HEK293 (cell line): ENCODE measurements at regions of chr5 and their contacts with region 1.

Region 1: DNA sequence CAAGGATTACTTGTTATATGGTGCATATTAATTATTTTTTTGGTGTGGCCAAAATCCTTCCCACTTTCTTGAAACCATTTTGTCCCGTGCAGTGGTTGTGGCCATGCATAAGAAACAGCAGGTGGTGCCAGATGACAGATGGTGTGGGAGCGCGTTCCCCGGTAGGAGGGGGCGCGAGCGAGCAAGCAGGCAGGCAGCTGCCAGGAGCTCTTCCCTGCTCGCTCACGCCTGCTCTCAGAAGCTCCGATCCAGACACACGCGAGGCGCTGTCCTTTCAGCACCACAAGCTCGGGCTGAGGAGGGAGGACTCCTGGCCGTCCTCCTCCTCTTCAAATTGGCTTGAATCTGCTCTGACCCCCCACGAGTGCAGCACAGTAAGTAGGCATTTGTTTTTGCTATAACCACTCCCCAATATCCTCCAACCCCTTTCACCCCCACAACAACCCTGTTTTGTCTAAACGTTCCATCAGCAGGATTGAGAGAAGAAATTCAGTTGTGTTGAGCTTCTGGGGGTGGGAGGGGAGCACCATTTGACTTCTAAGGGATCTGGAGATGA is at the start of gene NSG2:
- H3K4me3 ChIP-seq: no peak within 1 kb of the TSS
- H3K27ac ChIP-seq: no peak within 1 kb of the TSS
- H3K4me1 ChIP-seq: no peaks in the 10 kb centered on the region
- CTCF ChIP-seq: peak; percentile 99

Region 2: DNA sequence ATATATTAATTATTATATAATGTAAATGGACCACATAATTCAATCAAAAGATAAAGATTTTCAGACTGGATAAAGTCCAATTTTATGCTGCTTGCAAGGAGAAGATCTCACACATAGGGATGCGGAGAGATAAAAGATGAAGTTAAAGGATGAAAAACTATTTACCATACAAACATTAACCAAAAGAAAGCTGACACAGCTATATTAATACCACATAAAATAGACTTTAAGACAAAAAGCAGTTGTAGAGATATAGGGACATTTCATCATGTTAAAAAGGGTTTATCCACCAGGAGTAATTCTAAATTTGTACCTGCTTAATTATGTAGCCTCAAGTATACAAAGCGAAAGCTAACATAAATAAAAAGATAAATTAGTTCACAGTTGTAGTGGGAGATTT is 15.3 kb before region 1 on chr5:
- CTCF ChIA-PET with region 1: interaction called, 10 read pairs
- POLR2A ChIA-PET with region 1: no interaction called
- H3K4me3 ChIP-seq: no peak overlapping the region
- H3K27ac ChIP-seq: no peak overlapping the region
- H3K4me1 ChIP-seq: no peaks in the 10 kb centered on the region
- CTCF ChIP-seq: no peak

Region 3: DNA sequence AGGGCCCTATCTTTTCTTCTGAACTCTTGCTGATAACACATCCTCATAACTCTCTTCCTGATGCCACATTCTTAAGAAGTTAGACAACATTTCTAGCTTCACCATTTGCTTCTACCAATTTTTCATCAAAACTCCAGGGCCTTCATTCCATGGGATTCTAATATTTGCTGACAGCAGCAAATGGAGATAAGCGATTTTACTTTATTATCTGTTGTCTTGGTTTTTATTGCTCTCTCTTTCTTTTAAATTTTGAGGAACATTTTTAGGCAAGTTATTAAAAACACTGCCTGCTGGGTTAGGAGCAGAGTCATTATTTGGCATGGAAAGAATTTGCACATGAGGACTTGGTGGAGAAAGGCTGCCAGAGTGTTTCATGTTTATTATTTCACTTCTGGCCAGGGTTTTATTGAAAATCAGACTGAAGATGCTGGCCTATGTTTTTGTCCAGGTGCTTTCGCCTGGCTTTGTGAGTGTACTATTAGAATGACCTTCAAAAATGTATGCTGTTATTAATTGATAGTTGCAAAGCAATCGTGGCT is 27.6 kb after region 1 on chr5:
- CTCF ChIA-PET with region 1: interaction called, 11 read pairs
- POLR2A ChIA-PET with region 1: no interaction called
- H3K4me3 ChIP-seq: no peak overlapping the region
- H3K27ac ChIP-seq: no peak overlapping the region
- H3K4me1 ChIP-seq: no peaks in the 10 kb centered on the region
- CTCF ChIP-seq: no peak

Region 4: DNA sequence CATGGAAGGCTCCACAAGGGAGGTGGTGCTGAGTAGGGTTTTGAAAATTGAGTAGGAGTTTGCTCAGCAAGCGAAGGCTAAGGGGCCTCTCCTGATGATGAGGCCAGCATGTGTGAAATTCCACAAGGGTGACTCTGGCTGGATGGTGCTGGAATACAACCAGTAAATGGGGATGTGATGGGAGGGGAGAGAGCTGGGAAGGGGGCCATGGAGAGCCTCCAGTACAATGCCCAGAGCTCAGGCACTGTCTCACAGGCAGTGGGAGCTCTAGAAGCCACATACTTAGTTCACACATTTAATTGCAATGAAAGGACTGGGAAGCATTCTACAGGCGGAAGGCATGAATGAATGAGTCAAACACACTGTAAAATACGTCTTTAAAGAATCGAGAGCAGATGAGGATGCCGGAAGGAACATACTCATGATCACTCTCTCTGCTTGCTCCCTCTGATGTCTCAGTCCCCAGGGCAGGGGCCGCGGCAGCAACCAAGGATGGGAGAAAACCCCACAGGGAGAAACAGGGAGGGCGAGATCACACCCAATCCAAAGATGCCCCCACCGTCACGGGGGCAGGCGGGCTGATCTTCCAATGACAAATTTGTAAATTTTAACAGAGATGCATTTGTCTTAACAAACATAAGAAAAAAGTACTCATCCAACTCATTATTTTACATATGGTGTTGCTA is 260.9 kb after region 1 on chr5:
- CTCF ChIA-PET with region 1: interaction called, 108 read pairs
- POLR2A ChIA-PET with region 1: interaction called, 5 read pairs
- H3K4me3 ChIP-seq: no peak overlapping the region
- H3K27ac ChIP-seq: no peak overlapping the region
- H3K4me1 ChIP-seq: no peaks in the 10 kb centered on the region
- CTCF ChIP-seq: no peak

Region 5: DNA sequence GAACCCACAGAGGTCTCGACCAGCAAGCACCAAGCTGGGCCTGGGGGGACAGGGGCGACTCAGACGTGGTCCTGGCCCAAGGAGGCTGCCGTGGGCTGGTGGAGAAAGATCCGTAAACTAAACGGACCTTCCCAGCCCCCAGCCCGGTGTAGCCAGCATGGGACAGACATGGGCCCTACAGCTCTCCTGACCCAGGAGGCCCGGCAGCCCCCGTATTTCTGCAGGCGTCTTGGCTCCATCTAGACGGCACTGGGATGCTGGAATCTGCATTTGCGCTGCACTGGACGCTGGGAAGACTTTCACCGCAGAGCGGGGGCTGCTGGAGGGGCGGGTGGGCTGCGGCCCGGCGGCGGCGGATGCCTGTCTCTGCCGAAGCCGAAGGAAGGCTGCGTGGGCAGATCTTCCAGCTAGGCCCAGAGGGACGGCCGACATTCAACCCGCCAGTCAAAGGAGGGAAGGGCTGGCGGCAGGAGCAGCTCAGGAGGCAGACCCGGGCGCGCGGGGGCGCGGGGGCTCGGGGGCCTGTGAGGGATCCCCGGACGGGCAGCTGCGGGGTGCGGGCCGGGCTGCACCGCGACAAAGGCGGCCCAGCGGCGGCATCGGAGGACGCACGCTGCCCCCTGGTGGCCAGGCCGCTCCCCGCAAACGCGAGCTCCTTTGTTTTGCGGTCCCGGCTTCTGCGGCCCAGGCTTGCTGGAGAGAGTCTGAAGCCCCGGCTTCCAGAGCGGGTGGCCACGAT is 266.2 kb after region 1 on chr5:
- CTCF ChIA-PET with region 1: interaction called, 113 read pairs
- POLR2A ChIA-PET with region 1: interaction called, 5 read pairs
- H3K4me3 ChIP-seq: peak overlapping the region; percentile 39
- H3K27ac ChIP-seq: no peak overlapping the region
- H3K4me1 ChIP-seq: no peaks in the 10 kb centered on the region
- CTCF ChIP-seq: peak; percentile 84

Region 6: GRCh38 chr5:174317259-174317894 is 271.8 kb after region 1 on chr5:
- CTCF ChIA-PET with region 1: interaction called, 113 read pairs
- POLR2A ChIA-PET with region 1: interaction called, 4 read pairs
- H3K4me3 ChIP-seq: no peak overlapping the region
- H3K27ac ChIP-seq: no peak overlapping the region
- H3K4me1 ChIP-seq: no peaks in the 10 kb centered on the region
- CTCF ChIP-seq: peak; percentile 92